SK-N-SH (cell line): ENCODE measurements at regions of chr6 and their contacts with region 1.

Region 1: DNA sequence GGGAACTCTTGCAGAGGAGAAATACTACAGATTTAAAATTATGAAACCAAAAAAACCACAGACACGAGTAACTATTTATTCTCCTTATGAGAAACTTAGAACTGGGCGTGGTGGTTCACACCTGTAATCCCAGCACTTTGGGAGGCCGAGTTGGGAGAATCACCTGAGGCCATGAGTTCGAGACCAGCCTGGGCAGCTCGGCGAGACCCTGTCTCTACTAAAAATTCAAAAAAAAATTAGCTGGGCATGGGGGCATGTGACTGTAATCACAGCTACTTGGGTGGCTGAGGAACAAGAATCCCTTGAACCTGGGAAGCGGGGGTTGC is 36.8 kb downstream of the SSR1 start:
- DNase-seq: no peak
- H3K4me3 ChIP-seq: no peak overlapping the region; a peak in 1 of 4 replicates
- H3K27ac ChIP-seq: no peak overlapping the region
- H3K4me1 ChIP-seq: no peaks in the 10 kb centered on the region
- H3K27me3 ChIP-seq: no peaks in the 10 kb centered on the region
- CTCF ChIP-seq: no peak
- EP300 ChIP-seq: no peak
- RAD21 ChIP-seq: no peak

Region 2: DNA sequence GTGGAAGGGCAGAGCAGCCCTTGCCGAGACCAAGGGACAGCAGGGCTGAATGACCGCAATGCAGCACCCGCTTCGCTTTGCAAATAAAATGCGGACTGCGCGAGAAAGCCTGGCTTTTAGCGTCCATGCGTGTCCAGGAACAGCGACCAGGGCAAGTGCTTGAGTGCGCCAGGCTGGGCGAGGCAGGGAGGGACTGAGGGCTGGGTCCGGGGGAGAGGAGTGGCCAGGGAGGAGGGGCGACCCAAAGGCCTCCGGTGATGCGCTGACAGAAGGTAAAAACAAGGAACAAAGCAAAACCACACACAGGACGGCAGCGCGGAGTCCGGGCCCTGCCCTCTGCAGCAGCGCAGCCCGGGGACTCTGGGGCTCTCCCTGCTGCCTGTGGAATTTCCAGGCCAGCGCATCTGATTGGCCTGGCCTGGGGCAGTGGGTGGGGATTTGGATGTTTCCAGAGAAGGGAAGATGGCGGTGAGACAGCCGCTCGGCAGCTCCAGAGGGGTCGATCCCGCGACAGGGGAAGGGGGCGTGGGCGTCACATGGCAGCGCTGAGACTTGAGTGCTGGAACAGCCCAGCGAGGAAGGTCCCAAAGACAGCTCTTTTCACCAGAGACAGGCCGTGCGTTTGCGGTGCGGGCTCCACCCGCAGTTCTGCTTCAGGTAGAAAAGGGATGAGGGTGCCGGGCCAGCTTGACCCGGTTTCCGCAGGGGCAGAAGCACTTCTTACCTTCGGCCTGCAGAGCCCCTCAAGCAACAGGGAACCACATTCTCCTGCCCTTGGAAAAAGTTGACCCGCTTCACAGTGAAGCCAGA is 14.9 kb before region 1 on chr6:
- CTCF ChIA-PET with region 1: interaction called, 28 read pairs
- POLR2A ChIA-PET with region 1: no interaction called
- DNase-seq: peak; percentile 90
- H3K4me3 ChIP-seq: peak overlapping the region; percentile 44 to 70
- H3K27ac ChIP-seq: no peak overlapping the region; a peak in 1 of 4 replicates
- H3K4me1 ChIP-seq: peaks cover 0 to 6% of the 10 kb centered on the region in 2 experiments; a peak in 1 of 4 replicates
- H3K27me3 ChIP-seq: no peaks in the 10 kb centered on the region
- CTCF ChIP-seq: no peak
- EP300 ChIP-seq: no peak
- RAD21 ChIP-seq: no peak

Region 3: GRCh38 chr6:7292596-7293255 is 16.6 kb after region 1 on chr6:
- CTCF ChIA-PET with region 1: interaction called, 12 read pairs
- POLR2A ChIA-PET with region 1: no interaction called
- DNase-seq: no peak
- H3K4me3 ChIP-seq: no peak overlapping the region
- H3K27ac ChIP-seq: no peak overlapping the region
- H3K4me1 ChIP-seq: 0 out of 4 replicates have a peak, but pooled peaks cover 0 to 3% of the 10 kb centered on the region in 2 experiments
- H3K27me3 ChIP-seq: no peaks in the 10 kb centered on the region
- CTCF ChIP-seq: no peak
- EP300 ChIP-seq: no peak
- RAD21 ChIP-seq: no peak

Region 4: DNA sequence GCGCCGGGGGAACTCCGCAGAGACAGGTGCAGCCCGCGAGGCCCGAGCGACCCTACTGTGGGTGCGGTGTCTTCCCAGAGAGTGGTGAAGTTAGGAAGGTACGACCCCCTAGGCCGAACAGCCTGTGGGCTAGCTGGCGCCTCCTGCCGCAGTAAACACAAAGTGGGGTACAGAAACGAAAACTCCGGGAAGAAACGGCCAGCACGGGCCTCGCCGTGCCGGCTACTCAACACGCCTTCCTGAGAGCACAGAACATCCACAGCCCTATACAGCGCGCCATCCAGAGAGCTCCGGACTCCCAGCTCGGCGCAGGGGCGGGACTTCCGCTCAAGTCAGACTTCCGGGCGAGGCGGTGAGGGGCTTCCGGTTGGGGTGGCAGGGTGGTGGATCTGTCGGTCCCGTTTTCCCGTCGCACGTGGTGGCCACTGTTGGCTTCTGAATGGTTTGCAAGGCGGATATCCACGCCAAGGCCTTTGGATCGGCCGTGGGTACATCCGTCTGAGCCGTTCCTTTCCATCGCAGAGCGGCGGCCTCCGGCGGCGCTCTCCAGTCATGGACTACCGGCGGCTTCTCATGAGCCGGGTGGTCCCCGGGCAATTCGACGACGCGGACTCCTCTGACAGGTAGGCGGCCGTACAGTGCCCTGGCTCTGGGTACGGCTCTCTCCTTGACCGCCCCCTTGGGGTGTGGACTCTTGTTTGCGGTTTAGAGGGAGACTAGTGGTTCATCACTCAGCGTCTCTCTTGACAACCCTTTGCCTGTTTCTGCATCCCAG is 113.5 kb after region 1 on chr6 and contains the starts of genes CAGE1 and RIOK1:
- CTCF ChIA-PET with region 1: interaction called, 17 read pairs
- POLR2A ChIA-PET with region 1: interaction called, 3 read pairs
- DNase-seq: peak; percentile 94
- H3K4me3 ChIP-seq: peak within 1 kb of the TSS; percentile 82 to 90
- H3K27ac ChIP-seq: peak within 1 kb of the TSS; percentile 77 to 93
- H3K4me1 ChIP-seq: peaks cover 0 to 14% of the 10 kb centered on the region in 2 experiments; a peak in 3 of 4 replicates
- H3K27me3 ChIP-seq: no peaks in the 10 kb centered on the region
- CTCF ChIP-seq: peak; percentile 33
- EP300 ChIP-seq: no peak; a peak in 1 of 4 replicates
- RAD21 ChIP-seq: no peak
- polyA plus RNA-seq, gene CAGE1: 0.05 TPM in 1 of 2 replicates, not detected in the other
- polyA plus RNA-seq, gene RIOK1: 16.3 and 18.7 TPM in 2 replicates

Region 5: DNA sequence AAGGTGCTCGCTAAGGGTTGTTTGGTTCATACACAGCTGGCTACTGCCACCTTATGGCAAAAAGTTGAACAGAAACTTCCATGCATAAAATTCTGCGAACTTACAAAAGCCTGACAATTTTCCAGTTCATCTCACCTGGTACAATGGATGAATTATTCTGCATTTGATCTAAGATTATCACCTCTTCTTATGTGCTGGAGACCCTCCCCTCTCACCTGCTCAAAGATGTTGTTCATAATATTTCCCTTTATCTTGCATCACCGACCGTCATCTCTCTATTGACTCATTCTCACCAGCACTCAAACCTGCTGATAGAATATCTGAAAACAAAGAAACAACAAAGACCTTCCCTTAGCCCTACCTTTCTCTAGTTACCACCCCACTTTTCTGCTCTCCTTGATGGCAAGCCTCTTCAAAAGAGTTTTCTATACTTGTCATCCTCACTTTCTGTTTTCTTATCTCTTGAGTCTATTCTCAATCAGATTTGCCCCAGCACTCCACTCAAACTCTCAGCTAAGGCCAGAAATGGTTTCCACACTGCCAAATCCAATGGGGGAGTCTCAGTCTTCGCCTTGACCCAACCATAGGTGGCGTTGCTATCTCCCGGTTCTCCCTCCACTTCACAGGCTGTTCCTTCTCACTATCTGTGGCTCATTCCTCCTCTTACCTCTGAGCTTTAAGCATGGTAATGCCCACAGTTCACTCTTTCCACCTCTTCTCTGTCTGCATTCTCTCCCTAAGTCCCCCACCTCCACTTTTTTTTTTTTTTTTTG is 339.6 kb after region 1 on chr6:
- CTCF ChIA-PET with region 1: interaction called, 134 read pairs
- POLR2A ChIA-PET with region 1: interaction called, 4 read pairs
- DNase-seq: peak; percentile 41
- H3K4me3 ChIP-seq: peak overlapping the region in 1 of 2 experiments; percentile 20; a peak in 1 of 4 replicates
- H3K27ac ChIP-seq: no peak overlapping the region
- H3K4me1 ChIP-seq: no peaks in the 10 kb centered on the region
- H3K27me3 ChIP-seq: no peaks in the 10 kb centered on the region
- CTCF ChIP-seq: peak; percentile 86
- EP300 ChIP-seq: no peak
- RAD21 ChIP-seq: peak; percentile 90